Activated CD4-positive, alpha-beta T cell treated with anti-CD3 and anti-CD28 coated beads for 36 hours (primary cell): ENCODE measurements at regions of chr6 and their contacts with region 1.

Region 1: GRCh38 chr6:135624402-135625295 is 127.1 kb upstream of the AHI1 start:
- DNase-seq: peak; percentile 19
- ATAC-seq: peak; percentile 84
- H3K4me3 Mint-ChIP-seq: no peak overlapping the region
- H3K27ac Mint-ChIP-seq: peak overlapping the region; percentile 90
- H3K4me1 Mint-ChIP-seq: peaks cover 31% of the 10 kb centered on the region
- H3K27me3 Mint-ChIP-seq: no peaks in the 10 kb centered on the region

Region 2: GRCh38 chr6:135577059-135577538 is 47.5 kb before region 1 on chr6:
- CTCF ChIA-PET with region 1: interaction called, 3 read pairs
- POLR2A ChIA-PET with region 1: no interaction called
- intact Hi-C with region 1: loop called (anchors 1 to 5 kb)
- DNase-seq: no peak
- ATAC-seq: peak; percentile 94
- H3K4me3 Mint-ChIP-seq: peak overlapping the region; percentile 8
- H3K27ac Mint-ChIP-seq: peak overlapping the region; percentile 70
- H3K4me1 Mint-ChIP-seq: peaks cover 23% of the 10 kb centered on the region
- H3K27me3 Mint-ChIP-seq: no peaks in the 10 kb centered on the region

Region 3: GRCh38 chr6:135606392-135606791 is 18.3 kb before region 1 on chr6:
- CTCF ChIA-PET with region 1: interaction called, 3 read pairs
- POLR2A ChIA-PET with region 1: interaction called, 3 read pairs
- intact Hi-C with region 1: loop called in 1 of 2 experiments (anchors 1 kb)
- DNase-seq: no peak
- ATAC-seq: no peak
- H3K4me3 Mint-ChIP-seq: no peak overlapping the region
- H3K27ac Mint-ChIP-seq: peak overlapping the region; percentile 20
- H3K4me1 Mint-ChIP-seq: peaks cover 30% of the 10 kb centered on the region
- H3K27me3 Mint-ChIP-seq: no peaks in the 10 kb centered on the region

Region 4: DNA sequence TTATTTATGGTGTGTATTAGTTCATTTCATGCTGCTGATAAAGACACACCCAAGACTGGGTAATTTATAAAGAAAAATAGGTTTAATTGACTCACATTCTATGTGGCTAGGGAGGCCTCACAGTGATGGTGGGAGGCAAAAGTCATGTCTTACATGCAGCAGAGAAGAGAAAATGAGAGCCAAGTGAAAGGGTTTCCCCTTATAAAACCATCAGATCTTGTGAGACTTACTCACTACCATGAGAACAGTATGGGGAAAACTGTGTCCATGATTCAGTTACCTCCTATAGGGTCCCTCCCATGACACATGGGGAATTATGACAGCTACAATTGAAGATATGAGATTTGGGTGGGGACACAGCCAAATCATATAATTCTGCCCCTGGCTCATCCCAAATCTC is 22.9 kb after region 1 on chr6:
- CTCF ChIA-PET with region 1: no interaction called
- POLR2A ChIA-PET with region 1: no interaction called
- intact Hi-C with region 1: loop called in 1 of 2 experiments (anchors 1 kb)
- DNase-seq: peak; percentile 55
- ATAC-seq: peak; percentile 92
- H3K4me3 Mint-ChIP-seq: no peak overlapping the region
- H3K27ac Mint-ChIP-seq: peak overlapping the region; percentile 63
- H3K4me1 Mint-ChIP-seq: peaks cover 45% of the 10 kb centered on the region
- H3K27me3 Mint-ChIP-seq: no peaks in the 10 kb centered on the region

Region 5: GRCh38 chr6:135675862-135676261 is 51.2 kb after region 1 on chr6:
- CTCF ChIA-PET with region 1: no interaction called
- POLR2A ChIA-PET with region 1: no interaction called
- intact Hi-C with region 1: no loop called
- DNase-seq: peak; percentile 51
- ATAC-seq: peak; percentile 82
- H3K4me3 Mint-ChIP-seq: no peak overlapping the region
- H3K27ac Mint-ChIP-seq: no peak overlapping the region
- H3K4me1 Mint-ChIP-seq: peaks cover 19% of the 10 kb centered on the region
- H3K27me3 Mint-ChIP-seq: no peaks in the 10 kb centered on the region

Region 6: DNA sequence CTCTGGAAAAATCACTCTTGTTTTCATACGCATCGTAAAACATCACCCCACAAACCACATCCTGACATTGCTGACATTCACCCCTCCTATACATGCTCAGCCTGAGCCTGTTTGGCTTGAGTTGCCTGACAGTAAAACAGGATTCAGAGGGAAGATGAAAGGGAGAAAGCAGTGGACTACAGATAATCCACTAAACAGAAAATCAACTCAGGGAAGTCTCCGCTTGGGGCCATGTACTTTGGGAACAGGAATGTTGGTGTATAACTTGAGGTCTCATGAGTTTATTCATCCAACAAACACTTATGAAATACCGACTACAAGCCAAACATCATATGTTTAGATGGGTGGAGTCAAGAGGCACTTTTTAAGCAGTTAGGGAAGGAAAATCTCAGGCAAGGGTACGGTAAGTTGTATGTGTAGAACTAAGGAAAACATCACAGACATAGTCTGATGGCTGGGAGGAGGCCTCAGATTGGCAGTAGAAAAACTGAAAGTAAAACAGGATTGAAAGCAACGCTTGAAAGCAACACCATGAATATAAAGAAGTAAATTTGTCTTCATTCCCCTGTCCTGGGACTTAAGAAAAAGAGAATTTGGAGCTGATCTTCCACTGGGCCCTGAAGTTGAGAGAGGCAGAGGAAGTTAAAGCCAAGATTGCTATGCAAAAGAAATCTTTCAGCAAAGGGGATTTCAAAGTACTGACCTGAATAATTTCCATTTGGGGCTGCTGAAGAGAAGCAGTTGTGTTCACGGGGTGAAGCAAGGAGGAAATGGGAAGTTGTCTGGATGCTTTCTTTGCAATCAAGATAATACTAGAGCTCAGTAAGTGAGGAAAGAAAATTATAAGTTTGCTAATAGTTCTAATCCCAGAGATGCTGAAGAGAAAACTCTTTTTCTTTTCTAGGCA is 255.7 kb after region 1 on chr6:
- CTCF ChIA-PET with region 1: no interaction called
- POLR2A ChIA-PET with region 1: no interaction called
- intact Hi-C with region 1: no loop called
- DNase-seq: peak; percentile 68
- ATAC-seq: peak; percentile 92
- H3K4me3 Mint-ChIP-seq: peak overlapping the region; percentile 72
- H3K27ac Mint-ChIP-seq: peak overlapping the region; percentile 98
- H3K4me1 Mint-ChIP-seq: peaks cover 67% of the 10 kb centered on the region
- H3K27me3 Mint-ChIP-seq: no peaks in the 10 kb centered on the region